CD8-positive, alpha-beta T cell (primary cell): ENCODE measurements at regions of chr18 and their contacts with region 1.

Region 1: GRCh38 chr18:2958819-2959298 is 54.1 kb downstream of the LPIN2 start:
- DNase-seq: peak in 2 of 9 experiments; percentile 49 to 70
- ATAC-seq: no peak
- H3K4me3 ChIP-seq: no peak overlapping the region
- H3K4me3 Mint-ChIP-seq: peak overlapping the region; percentile 50
- H3K27ac ChIP-seq: peak overlapping the region; percentile 65 to 90
- H3K27ac Mint-ChIP-seq: peak overlapping the region; percentile 97
- H3K4me1 ChIP-seq: peaks cover 92% of the 10 kb centered on the region
- H3K4me1 Mint-ChIP-seq: peaks cover 89% of the 10 kb centered on the region
- H3K27me3 ChIP-seq: no peaks in the 10 kb centered on the region
- H3K27me3 Mint-ChIP-seq: no peaks in the 10 kb centered on the region
- CTCF ChIP-seq: no peak

Region 2: GRCh38 chr18:2636126-2636631 is 322.7 kb before region 1 on chr18:
- CTCF ChIA-PET with region 1: no interaction called
- POLR2A ChIA-PET with region 1: interaction called, 4 read pairs
- intact Hi-C with region 1: loop called in 1 of 2 experiments (anchors 5 kb)
- DNase-seq: peak in 2 of 9 experiments; percentile 22 to 65
- ATAC-seq: peak; percentile 43
- H3K4me3 ChIP-seq: peak overlapping the region; percentile 41 to 44
- H3K4me3 Mint-ChIP-seq: peak overlapping the region; percentile 83
- H3K27ac ChIP-seq: peak overlapping the region; percentile 92 to 95
- H3K27ac Mint-ChIP-seq: peak overlapping the region; percentile 100
- H3K4me1 ChIP-seq: peaks cover 64% of the 10 kb centered on the region
- H3K4me1 Mint-ChIP-seq: peaks cover 88% of the 10 kb centered on the region
- H3K27me3 ChIP-seq: no peaks in the 10 kb centered on the region
- H3K27me3 Mint-ChIP-seq: no peaks in the 10 kb centered on the region
- CTCF ChIP-seq: no peak

Region 3: GRCh38 chr18:2932247-2933181 is 26.3 kb before region 1 on chr18:
- CTCF ChIA-PET with region 1: interaction called, 7 read pairs
- POLR2A ChIA-PET with region 1: interaction called, 4 read pairs
- intact Hi-C with region 1: loop called in 1 of 2 experiments (anchors 2 kb)
- DNase-seq: peak in 6 of 9 experiments; percentile 37 to 82 (median 52)
- ATAC-seq: peak; percentile 79
- H3K4me3 ChIP-seq: no peak overlapping the region
- H3K4me3 Mint-ChIP-seq: no peak overlapping the region
- H3K27ac ChIP-seq: peak overlapping the region in 1 of 2 experiments; percentile 51
- H3K27ac Mint-ChIP-seq: peak overlapping the region; percentile 89
- H3K4me1 ChIP-seq: peaks cover 6% of the 10 kb centered on the region
- H3K4me1 Mint-ChIP-seq: peaks cover 23% of the 10 kb centered on the region
- H3K27me3 ChIP-seq: no peaks in the 10 kb centered on the region
- H3K27me3 Mint-ChIP-seq: no peaks in the 10 kb centered on the region
- CTCF ChIP-seq: peak; percentile 96

Region 4: DNA sequence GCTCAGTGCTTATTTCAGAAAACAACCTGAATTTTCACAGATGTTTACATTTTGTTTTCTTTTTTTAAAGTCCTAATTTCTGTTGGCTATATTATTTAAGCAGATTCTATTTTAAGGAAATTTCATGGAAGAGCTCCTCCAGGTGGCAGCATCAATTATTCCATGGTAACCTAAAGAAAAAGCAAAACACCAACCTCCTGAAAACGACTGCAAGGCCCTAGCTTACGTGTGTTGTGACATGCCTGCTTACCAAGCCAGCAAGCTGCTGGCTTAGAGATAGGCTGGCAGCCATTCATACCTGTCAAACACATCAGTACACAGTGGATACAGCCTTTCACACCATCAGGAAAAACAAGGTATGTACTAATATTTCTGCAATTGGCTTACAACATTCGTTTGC is 10.8 kb before region 1 on chr18:
- CTCF ChIA-PET with region 1: interaction called, 6 read pairs
- POLR2A ChIA-PET with region 1: interaction called, 4 read pairs
- intact Hi-C with region 1: loop called in 1 of 2 experiments (anchors 2 kb)
- DNase-seq: peak in 1 of 9 experiments; percentile 38
- ATAC-seq: no peak
- H3K4me3 ChIP-seq: no peak overlapping the region
- H3K4me3 Mint-ChIP-seq: no peak overlapping the region
- H3K27ac ChIP-seq: no peak overlapping the region
- H3K27ac Mint-ChIP-seq: no peak overlapping the region
- H3K4me1 ChIP-seq: peaks cover 19% of the 10 kb centered on the region
- H3K4me1 Mint-ChIP-seq: peaks cover 47% of the 10 kb centered on the region
- H3K27me3 ChIP-seq: no peaks in the 10 kb centered on the region
- H3K27me3 Mint-ChIP-seq: no peaks in the 10 kb centered on the region
- CTCF ChIP-seq: no peak

Region 5: DNA sequence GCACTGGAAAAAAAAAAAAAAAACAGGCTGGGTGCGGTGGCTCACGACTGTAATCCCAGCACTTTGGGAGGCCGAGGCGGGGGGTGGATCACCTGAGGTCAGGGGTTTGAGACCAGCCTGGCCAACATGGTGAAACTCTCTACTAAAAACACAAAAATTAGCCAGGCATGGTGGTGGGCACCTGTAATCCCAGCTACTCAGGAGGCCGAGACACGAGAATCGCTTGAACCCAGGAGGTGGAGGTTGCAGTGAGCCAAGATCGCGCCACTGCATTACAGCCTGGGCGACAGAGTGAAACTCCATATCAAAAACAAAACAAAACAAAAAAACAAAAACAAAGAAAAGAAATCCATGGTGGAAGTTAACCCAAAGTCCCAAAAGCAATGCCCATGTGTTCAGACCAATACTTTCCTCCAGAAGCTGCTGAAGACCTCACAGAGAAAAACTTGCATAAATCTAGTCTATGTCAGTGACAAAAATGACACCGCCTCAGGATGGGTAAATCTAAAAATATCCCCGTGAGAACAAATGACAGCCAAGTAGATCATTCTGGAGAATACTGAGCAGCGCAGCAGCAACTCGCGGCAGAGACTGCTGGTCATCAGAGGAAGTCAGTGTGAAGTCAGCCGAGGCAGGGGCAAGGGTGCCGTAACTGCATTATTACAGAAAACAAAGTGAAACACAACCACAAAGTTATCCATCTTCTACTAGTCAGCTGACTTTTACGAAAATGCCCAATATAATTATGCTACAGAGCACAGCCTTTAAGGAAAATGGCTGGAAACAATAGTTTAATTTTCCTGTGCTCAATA is 13.1 kb after region 1 on chr18:
- CTCF ChIA-PET with region 1: interaction called, 127 read pairs
- POLR2A ChIA-PET with region 1: interaction called, 86 read pairs
- intact Hi-C with region 1: loop called in 1 of 2 experiments (anchors 1 kb)
- DNase-seq: peak; percentile 30 to 90 (median 72)
- ATAC-seq: peak; percentile 78
- H3K4me3 ChIP-seq: peak overlapping the region; percentile 41
- H3K4me3 Mint-ChIP-seq: peak overlapping the region; percentile 88
- H3K27ac ChIP-seq: peak overlapping the region; percentile 43 to 96
- H3K27ac Mint-ChIP-seq: peak overlapping the region; percentile 95
- H3K4me1 ChIP-seq: peaks cover 81% of the 10 kb centered on the region
- H3K4me1 Mint-ChIP-seq: peaks cover 91% of the 10 kb centered on the region
- H3K27me3 ChIP-seq: no peaks in the 10 kb centered on the region
- H3K27me3 Mint-ChIP-seq: no peaks in the 10 kb centered on the region
- CTCF ChIP-seq: no peak

Region 6: DNA sequence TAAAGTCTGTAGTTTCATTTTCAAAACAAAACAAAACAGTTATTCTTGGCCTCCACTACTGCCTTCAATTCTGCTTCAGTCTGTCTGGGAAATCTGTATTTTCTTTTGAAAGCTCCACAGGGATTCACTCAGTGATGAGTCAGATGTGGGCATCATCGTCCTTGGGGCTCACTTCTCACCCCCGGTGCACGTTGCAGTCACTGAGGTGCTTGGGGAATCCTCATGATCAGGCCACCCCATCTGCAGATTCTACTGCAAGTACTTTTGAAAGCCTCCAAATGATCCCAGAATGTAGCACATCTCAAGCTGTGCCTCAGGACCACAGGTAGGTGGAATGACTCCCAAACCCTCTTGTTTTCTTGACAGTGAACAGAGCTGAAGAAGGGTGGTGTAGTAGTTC is 19.8 kb after region 1 on chr18:
- CTCF ChIA-PET with region 1: interaction called, 127 read pairs
- POLR2A ChIA-PET with region 1: interaction called, 86 read pairs
- intact Hi-C with region 1: loop called (anchors 1 to 2 kb)
- DNase-seq: peak in 3 of 9 experiments; percentile 47 to 68 (median 55)
- ATAC-seq: peak; percentile 21
- H3K4me3 ChIP-seq: peak overlapping the region; percentile 19 to 22
- H3K4me3 Mint-ChIP-seq: peak overlapping the region; percentile 81
- H3K27ac ChIP-seq: peak overlapping the region; percentile 25 to 87
- H3K27ac Mint-ChIP-seq: peak overlapping the region; percentile 92
- H3K4me1 ChIP-seq: peaks cover 61% of the 10 kb centered on the region
- H3K4me1 Mint-ChIP-seq: peaks cover 77% of the 10 kb centered on the region
- H3K27me3 ChIP-seq: no peaks in the 10 kb centered on the region
- H3K27me3 Mint-ChIP-seq: no peaks in the 10 kb centered on the region
- CTCF ChIP-seq: no peak

Region 7: GRCh38 chr18:3012964-3013804 is 54.3 kb after region 1 on chr18 and contains the start of gene LPIN2:
- CTCF ChIA-PET with region 1: no interaction called
- POLR2A ChIA-PET with region 1: no interaction called
- intact Hi-C with region 1: loop called in 1 of 2 experiments (anchors 1 kb)
- DNase-seq: peak; percentile 93 to 98 (median 95)
- ATAC-seq: peak; percentile 87
- H3K4me3 ChIP-seq: peak within 1 kb of the TSS; percentile 53
- H3K4me3 Mint-ChIP-seq: peak within 1 kb of the TSS; percentile 95
- H3K27ac ChIP-seq: peak within 1 kb of the TSS; percentile 73 to 79
- H3K27ac Mint-ChIP-seq: peak within 1 kb of the TSS; percentile 93
- H3K4me1 ChIP-seq: peaks cover 55% of the 10 kb centered on the region
- H3K4me1 Mint-ChIP-seq: peaks cover 64% of the 10 kb centered on the region
- H3K27me3 ChIP-seq: no peaks in the 10 kb centered on the region
- H3K27me3 Mint-ChIP-seq: no peaks in the 10 kb centered on the region
- CTCF ChIP-seq: no peak
- total RNA-seq, gene LPIN2: 50.3 to 50.9 TPM

Region 8: DNA sequence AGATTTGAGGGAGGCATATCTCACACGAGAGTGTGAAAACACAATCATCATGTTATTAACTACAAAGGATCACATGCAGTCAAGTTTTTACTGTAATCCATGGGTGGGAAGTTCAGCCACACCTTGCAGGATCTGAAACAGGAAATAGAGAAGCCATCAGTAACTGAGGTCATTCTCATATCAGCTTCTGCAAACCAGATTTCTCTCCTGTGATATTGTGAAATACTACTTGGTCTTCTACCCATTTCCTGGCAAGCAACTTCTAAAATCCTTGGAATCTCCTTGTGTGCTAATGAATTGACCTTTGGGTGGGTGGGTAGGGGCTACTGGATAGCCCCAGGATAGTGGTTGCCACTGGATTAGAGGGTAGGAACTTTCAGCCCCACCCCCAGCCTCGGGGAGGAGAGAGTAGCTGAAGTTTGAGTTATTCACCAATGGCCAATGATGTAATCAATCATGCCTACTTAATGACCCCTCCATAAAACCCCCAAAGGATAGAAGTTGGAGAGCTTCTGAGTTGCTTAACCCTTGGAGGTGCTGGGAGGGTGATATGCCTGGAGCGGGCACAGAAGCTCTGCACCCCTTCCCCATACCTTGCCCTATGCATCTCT is 465.5 kb after region 1 on chr18:
- CTCF ChIA-PET with region 1: no interaction called
- POLR2A ChIA-PET with region 1: no interaction called
- intact Hi-C with region 1: no loop called
- DNase-seq: no peak
- ATAC-seq: no peak
- H3K4me3 ChIP-seq: no peak overlapping the region
- H3K4me3 Mint-ChIP-seq: no peak overlapping the region
- H3K27ac ChIP-seq: no peak overlapping the region
- H3K27ac Mint-ChIP-seq: no peak overlapping the region
- H3K4me1 ChIP-seq: no peaks in the 10 kb centered on the region
- H3K4me1 Mint-ChIP-seq: no peaks in the 10 kb centered on the region
- H3K27me3 ChIP-seq: no peaks in the 10 kb centered on the region
- H3K27me3 Mint-ChIP-seq: no peaks in the 10 kb centered on the region
- CTCF ChIP-seq: no peak